Cardiac septum (tissue), 1 donor: ENCODE measurements at regions of chr12 and their contacts with region 1.

Region 1: GRCh38 chr12:65602610-65603295 is 221.5 kb upstream of the HMGA2 start:
- DNase-seq: peak; percentile 86

Region 2: GRCh38 chr12:65561798-65562382 is 40.9 kb before region 1 on chr12:
- intact Hi-C with region 1: loop called (anchors 5 kb)
- DNase-seq: no peak

Region 3: DNA sequence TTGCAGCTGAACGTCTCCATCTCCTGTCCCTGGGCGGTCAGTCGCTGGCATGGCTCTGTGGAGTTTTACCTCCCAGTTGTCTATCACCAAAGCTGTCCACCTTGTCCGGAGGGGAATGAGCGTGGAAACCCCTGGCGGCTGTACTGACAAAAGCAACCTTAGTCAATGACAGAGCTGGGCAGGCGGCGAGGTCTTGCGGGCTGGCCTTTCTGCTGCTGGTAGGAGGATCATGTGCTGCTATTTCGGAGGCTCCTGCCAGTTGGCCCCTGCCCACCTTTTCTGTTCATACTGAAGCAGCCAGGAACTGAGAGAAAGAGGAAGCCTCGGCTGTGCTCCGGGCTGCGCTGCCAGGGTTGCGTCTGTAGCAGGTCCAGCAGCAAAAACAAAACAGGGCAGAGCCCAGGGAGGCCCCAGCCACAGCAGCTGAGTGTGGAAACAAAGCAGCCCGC is 279.2 kb after region 1 on chr12:
- intact Hi-C with region 1: loop called (anchors 10 kb)
- DNase-seq: peak; percentile 93

Region 4: DNA sequence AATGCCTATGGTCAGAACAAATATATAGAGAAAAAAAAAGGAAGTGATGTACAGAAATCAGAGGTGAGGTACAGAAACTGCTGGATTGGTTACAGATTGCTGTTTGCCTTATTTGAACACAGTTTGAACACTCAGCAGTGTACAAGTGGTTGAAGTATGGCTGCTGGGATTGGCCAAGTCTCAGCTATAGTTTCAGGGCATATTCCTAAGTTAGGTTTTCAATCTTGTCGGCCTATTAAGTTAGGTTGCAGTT is 381.4 kb after region 1 on chr12:
- intact Hi-C with region 1: loop called (anchors 5 kb)
- DNase-seq: no peak

Region 5: DNA sequence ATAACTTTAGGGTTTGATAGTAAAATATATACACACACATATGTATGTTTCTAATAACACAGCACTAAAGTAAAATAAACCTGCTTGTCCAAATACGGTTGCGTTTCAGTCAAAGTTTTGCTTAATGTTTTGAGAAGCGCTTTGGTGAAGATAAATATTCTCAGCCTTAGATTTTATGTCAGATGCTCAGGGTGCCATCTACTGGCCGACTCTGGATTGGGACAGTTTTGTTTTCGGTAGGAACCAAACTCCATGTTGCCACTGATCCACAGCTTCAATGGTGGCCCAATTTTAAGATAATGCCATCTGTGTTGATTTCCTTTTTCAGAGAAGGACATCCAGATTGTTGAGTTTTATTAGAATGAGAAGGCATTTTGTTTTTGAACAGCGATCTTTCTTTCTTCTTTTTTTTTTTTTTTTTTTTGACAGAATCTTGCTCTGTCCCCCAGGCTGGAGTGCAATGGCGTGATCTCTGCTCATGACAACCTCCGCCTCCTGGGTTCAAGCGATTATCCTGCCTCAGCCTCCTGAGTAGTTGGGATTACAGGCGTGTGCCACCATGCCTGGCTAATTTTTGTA is 484.7 kb after region 1 on chr12:
- intact Hi-C with region 1: loop called (anchors 5 kb)
- DNase-seq: no peak